Pancreas (tissue), 10 donors: ENCODE measurements at regions of chr2 and their contacts with region 1.

Region 1: DNA sequence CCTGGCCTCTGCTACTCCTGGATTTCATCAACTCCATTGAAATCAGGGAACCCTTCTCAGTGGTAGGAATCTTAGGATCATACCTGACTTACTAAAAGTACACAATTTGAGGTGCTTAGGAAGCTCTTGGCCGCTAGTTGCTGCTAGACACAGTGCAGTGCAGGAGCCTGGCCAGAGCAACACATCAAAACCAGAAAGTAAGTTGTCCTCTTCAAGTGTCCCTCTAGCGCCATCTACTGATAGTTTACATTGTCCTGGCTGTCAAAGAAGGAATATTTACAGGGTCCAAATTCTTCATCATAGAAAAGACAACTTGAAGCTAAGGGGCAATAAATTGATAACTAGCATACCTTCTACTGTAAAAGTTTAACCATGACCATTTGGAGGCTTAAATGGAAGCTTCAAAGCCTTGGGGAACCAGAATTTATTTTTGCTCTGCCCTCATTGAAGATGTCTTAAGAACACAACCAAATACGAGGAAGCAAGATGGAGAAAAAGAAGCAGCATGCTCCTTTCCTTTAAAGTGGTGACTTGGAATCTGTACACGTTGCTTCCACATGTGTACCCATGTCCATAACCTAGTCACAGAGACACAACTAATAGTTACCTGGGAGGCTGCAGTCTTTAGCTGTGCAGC is 889.1 kb upstream of the GCFC2 start:
- DNase-seq: peak in 4 of 6 donors; percentile 33 to 70 (median 50)
- ATAC-seq: peak; percentile 80 to 96 (median 94)
- H3K4me3 ChIP-seq: no peak overlapping the region
- H3K27ac ChIP-seq: no peak overlapping the region
- H3K4me1 ChIP-seq: no peaks in the 10 kb centered on the region
- H3K27me3 ChIP-seq: peaks cover 0 to 5% (median 1%) of the 10 kb centered on the region in 4 donors
- CTCF ChIP-seq: peak; percentile 58 to 69 (median 62)

Region 2: GRCh38 chr2:75787532-75788132 is 812.2 kb before region 1 on chr2:
- intact Hi-C with region 1: loop called in 1 of 3 experiments (anchors 10 kb)
- DNase-seq: no peak
- ATAC-seq: peak; percentile 50 to 71 (median 62)
- H3K4me3 ChIP-seq: no peak overlapping the region
- H3K27ac ChIP-seq: no peak overlapping the region
- H3K4me1 ChIP-seq: no peaks in the 10 kb centered on the region
- H3K27me3 ChIP-seq: no peaks in the 10 kb centered on the region
- CTCF ChIP-seq: peak in 3 of 4 donors; percentile 17 to 29 (median 28)

Region 3: DNA sequence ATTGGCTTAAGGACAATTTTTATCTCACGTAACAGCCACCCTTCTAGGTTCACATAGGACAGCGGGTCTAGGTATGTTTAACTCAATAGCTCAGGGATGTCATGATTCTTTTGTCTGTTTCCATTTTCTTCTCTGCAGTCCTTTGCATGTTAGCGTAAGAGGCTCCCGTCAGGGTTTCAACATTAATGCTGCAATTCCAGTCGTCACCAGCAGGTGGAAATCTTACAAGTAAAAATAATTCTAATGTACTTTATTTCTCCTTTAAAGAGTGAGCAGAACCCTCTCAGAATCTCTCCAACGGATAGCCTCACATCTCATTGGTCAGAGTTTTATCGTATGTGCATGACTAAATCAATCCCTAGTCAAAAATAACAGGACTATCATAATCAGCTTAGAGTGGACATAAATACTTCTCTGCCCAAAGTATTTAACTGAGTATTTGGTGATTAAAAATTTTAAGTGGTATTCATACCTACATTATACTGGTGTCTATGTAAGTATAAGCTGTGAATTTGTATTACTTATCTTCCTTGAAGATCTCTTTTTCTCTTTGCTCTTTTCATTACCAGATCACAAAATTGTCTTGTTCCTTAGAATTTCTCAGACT is 401.9 kb before region 1 on chr2:
- intact Hi-C with region 1: loop called in 1 of 3 experiments (anchors 10 kb)
- DNase-seq: peak in 5 of 6 donors; percentile 27 to 66 (median 51)
- ATAC-seq: peak in 3 of 4 donors; percentile 52 to 67 (median 56)
- H3K4me3 ChIP-seq: no peak overlapping the region
- H3K27ac ChIP-seq: no peak overlapping the region
- H3K4me1 ChIP-seq: peaks cover 0 to 4% (median 0%) of the 10 kb centered on the region in 3 donors
- H3K27me3 ChIP-seq: no peaks in the 10 kb centered on the region
- CTCF ChIP-seq: peak; percentile 64 to 80 (median 72)